ENCODE measurements at regions of chr3 and their contacts with region 1.

Region 1: DNA sequence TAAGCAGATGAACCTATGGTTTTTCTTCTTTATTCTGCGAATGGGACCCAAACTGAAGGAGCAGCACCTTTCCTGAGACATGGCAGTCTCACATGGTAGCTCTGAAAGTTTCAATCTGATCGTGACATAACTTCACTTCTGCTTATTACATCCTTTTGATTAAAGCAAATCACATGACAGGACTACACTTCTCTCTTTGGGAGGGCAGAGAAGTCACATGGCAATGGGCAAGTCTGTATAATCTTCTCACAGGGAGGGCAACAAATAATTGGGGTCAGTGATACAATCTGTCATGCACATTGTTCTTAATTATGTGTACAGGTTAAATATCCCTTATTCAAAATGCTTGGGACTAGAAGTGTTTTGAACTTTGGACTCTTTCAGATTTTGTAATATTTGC is 21.6 kb downstream of the NCBP2 start:
- DNase-seq: no peak
- ATAC-seq: no peak
- H3K4me3 ChIP-seq: no peak overlapping the region
- H3K4me3 Mint-ChIP-seq: no peak overlapping the region
- H3K27ac ChIP-seq: no peak overlapping the region
- H3K27ac Mint-ChIP-seq: peak overlapping the region; percentile 10 to 23
- H3K4me1 ChIP-seq: no peaks in the 10 kb centered on the region
- H3K4me1 Mint-ChIP-seq: peaks cover 0 to 7% (median 0%) of the 10 kb centered on the region in 3 donors
- H3K27me3 ChIP-seq: no peaks in the 10 kb centered on the region
- H3K27me3 Mint-ChIP-seq: no peaks in the 10 kb centered on the region

Region 2: GRCh38 chr3:196842567-196843434 is 77.9 kb before region 1 on chr3:
- CTCF ChIA-PET with region 1: no interaction called
- POLR2A ChIA-PET with region 1: interaction called in 1 of 2 experiments, 10 read pairs
- DNase-seq: no peak
- ATAC-seq: no peak
- H3K4me3 ChIP-seq: no peak overlapping the region
- H3K4me3 Mint-ChIP-seq: no peak overlapping the region
- H3K27ac ChIP-seq: no peak overlapping the region
- H3K27ac Mint-ChIP-seq: no peak overlapping the region
- H3K4me1 ChIP-seq: no peaks in the 10 kb centered on the region
- H3K4me1 Mint-ChIP-seq: peaks cover 0 to 3% (median 2%) of the 10 kb centered on the region in 3 donors
- H3K27me3 ChIP-seq: peaks cover 0 to 3% of the 10 kb centered on the region in 2 experiments
- H3K27me3 Mint-ChIP-seq: no peaks in the 10 kb centered on the region